HepG2 (cell line): ENCODE measurements at regions of chrX and their contacts with region 1.

Region 1: DNA sequence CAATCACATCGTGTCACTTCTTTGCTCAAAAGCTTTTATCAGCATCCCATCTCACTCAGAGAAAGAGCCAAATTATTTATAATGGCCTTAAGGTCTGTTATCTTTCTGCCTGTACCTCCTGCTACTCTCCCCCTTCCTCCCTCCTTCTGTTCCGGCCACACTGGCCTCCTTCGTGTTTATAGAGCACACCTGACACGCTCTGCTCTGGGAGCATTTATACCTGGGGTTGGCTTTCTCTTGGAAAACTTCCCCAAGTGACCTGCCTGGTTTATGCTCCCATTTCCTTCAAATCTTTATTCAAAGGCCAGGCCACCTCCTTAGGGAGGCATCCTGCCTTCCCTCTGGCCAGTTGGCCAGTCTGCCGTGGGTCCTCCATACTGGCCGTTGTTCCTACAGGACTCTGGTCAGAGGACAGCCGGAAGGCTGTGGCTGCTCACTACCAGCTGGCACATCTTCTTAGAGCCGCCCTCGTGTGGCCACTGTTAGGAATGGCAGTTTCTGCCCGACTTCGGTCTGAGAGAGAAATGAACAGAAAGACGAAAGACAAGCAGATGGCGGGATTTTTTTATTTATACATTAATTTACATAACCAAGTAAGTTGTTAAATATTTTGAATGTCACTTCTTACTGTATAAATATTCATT is 80.2 kb upstream of the CBLL2 start:
- DNase-seq: peak; percentile 38
- ATAC-seq: peak; percentile 98
- H3K4me3 ChIP-seq: no peak overlapping the region
- H3K27ac ChIP-seq: no peak overlapping the region
- H3K4me1 ChIP-seq: no peaks in the 10 kb centered on the region
- H3K27me3 ChIP-seq: no peaks in the 10 kb centered on the region
- CTCF ChIP-seq: peak; percentile 77
- EP300 ChIP-seq: no peak
- POLR2A ChIP-seq: no peak
- RAD21 ChIP-seq: peak; percentile 54; the same call in 1 of the 2 replicates

Region 2: GRCh38 chrX:21985332-21985777 is 207.2 kb before region 1 on chrX:
- CTCF ChIA-PET with region 1: interaction called, 17 read pairs
- POLR2A ChIA-PET with region 1: no interaction called
- in situ Hi-C with region 1: loop called (anchors 25 kb)
- intact Hi-C with region 1: loop called (anchors 1 kb)
- DNase-seq: peak; percentile 62
- ATAC-seq: peak; percentile 91
- H3K4me3 ChIP-seq: no peak overlapping the region
- H3K27ac ChIP-seq: no peak overlapping the region
- H3K4me1 ChIP-seq: no peaks in the 10 kb centered on the region
- H3K27me3 ChIP-seq: no peaks in the 10 kb centered on the region
- CTCF ChIP-seq: peak; percentile 84
- EP300 ChIP-seq: no peak
- POLR2A ChIP-seq: no peak
- RAD21 ChIP-seq: peak; percentile 51